PC-3 (cell line): ENCODE measurements at regions of chr10 and their contacts with region 1.

Region 1: GRCh38 chr10:71766702-71767419 is 6.5 kb downstream of the VSIR start:
- DNase-seq: peak; percentile 89
- ATAC-seq: peak; percentile 75
- H3K4me3 ChIP-seq: no peak overlapping the region
- H3K27ac ChIP-seq: peak overlapping the region; percentile 79
- H3K4me1 ChIP-seq: peaks cover 33% of the 10 kb centered on the region
- H3K27me3 ChIP-seq: no peaks in the 10 kb centered on the region
- CTCF ChIP-seq: no peak

Region 2: GRCh38 chr10:71696628-71697326 is 70.1 kb before region 1 on chr10:
- CTCF ChIA-PET with region 1: interaction called, 3 read pairs
- POLR2A ChIA-PET with region 1: no interaction called
- intact Hi-C with region 1: loop called (anchors 5 kb)
- DNase-seq: peak; percentile 47
- ATAC-seq: peak; percentile 59; the same call in 1 of the 2 replicates
- H3K4me3 ChIP-seq: no peak overlapping the region
- H3K27ac ChIP-seq: no peak overlapping the region
- H3K4me1 ChIP-seq: peaks cover 12% of the 10 kb centered on the region; the same call in 1 of the 2 replicates
- H3K27me3 ChIP-seq: no peaks in the 10 kb centered on the region
- CTCF ChIP-seq: peak; percentile 78

Region 3: DNA sequence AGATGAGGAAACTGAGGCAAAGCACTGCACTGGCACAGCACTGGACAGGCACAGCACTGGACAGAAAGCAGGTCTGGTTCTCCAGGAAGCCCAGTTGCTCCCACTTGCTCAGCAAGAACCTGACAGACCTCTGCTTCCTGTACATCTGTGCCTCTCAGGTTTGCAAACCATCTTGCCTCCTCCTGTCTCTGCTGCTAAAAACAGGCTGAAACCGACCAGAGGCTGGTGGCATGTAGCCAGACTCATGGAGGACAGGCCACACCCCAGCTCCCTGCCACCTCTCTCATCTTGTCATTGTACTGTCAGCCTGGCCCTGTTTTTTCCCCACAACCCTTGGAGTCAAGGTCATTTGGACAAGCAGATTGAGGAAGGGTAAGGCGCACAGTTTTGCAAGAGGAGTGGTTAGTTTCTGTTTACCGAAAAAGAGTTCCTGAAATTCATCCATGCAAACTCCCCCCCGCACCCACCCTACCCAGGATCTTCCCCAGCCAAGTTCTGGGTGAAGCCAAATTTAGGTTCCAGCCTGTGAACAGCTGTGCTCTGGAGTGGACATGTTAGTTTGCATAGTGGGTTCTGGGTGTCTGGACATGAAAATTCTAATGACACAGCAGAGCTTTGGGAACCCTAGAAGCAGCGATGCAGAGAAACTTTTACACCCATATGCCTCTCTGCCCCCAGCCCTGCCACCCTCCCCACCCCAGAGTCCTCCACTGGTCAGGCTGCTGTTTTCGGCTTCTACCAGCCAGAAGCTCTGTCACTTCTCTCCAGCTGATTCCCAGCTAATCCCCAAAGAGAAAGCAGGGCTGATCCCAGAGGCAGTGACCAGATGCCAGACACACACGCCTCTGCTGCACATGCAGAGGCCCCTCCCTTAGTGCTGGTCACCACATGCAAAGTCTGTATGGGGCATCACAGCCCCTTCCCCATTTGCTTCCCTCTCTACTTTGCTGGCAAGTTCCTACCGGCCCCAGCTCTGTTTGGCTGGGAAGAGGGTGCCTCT is 38.8 kb before region 1 on chr10:
- CTCF ChIA-PET with region 1: no interaction called
- POLR2A ChIA-PET with region 1: no interaction called
- intact Hi-C with region 1: loop called (anchors 5 kb)
- DNase-seq: peak; percentile 18
- ATAC-seq: peak; percentile 31; the same call in 1 of the 2 replicates
- H3K4me3 ChIP-seq: no peak overlapping the region
- H3K27ac ChIP-seq: no peak overlapping the region
- H3K4me1 ChIP-seq: peaks cover 19% of the 10 kb centered on the region
- H3K27me3 ChIP-seq: no peaks in the 10 kb centered on the region
- CTCF ChIP-seq: no peak

Region 4: GRCh38 chr10:72278668-72279393 is 512.0 kb after region 1 on chr10:
- CTCF ChIA-PET with region 1: no interaction called
- POLR2A ChIA-PET with region 1: interaction called, 13 read pairs
- intact Hi-C with region 1: no loop called
- DNase-seq: no peak
- ATAC-seq: no peak
- H3K4me3 ChIP-seq: no peak overlapping the region
- H3K27ac ChIP-seq: no peak overlapping the region
- H3K4me1 ChIP-seq: peaks cover 19% of the 10 kb centered on the region
- H3K27me3 ChIP-seq: no peaks in the 10 kb centered on the region
- CTCF ChIP-seq: no peak; the same call in 1 of the 2 replicates